PC-9 (cell line): ENCODE measurements at regions of chr20 and their contacts with region 1.

Region 1: DNA sequence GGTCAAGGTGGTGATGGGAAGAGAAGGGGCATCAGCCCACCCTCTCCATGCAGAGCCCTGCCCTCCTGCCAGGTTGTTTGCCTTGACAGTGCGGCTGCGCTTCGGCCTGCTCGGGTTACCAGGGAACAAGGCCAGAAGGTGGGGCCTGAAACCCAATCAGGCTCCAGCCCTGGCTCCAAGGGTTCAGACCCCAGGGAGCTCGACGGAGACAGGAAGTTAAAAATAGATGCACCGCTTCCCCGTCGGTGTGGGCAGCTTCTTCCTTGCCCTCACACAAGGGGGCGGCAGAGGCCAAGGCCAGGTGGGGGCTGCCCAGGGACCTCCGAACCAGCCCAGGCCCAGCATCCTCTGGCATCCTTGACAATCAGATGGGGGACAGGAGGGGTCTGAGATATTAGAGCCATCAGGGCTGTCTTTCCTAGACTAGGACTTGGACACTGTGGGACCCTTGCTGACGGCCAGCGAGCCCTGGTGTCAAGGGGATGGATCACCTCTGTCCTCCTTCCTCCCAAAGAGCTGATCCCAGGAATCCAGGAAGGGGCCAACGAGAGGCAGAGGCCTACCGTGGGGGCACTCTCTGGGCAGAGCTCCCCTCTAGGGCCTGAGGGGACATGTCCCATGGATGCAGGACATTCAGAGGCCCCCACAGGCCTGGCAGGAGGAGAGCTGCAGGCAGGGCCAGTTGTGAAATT is 65.2 kb downstream of the RIPOR3 start:
- DNase-seq: peak in 1 of 2 experiments; percentile 65
- H3K4me3 ChIP-seq: no peak overlapping the region
- H3K27ac ChIP-seq: no peak overlapping the region
- H3K4me1 ChIP-seq: peaks cover 45% of the 10 kb centered on the region
- H3K27me3 ChIP-seq: no peaks in the 10 kb centered on the region
- CTCF ChIP-seq: peak; percentile 72

Region 2: GRCh38 chr20:50558483-50558947 is 67.6 kb before region 1 on chr20:
- CTCF ChIA-PET with region 1: interaction called, 11 read pairs
- POLR2A ChIA-PET with region 1: no interaction called
- intact Hi-C with region 1: no loop called
- DNase-seq: peak; percentile 55 to 64
- H3K4me3 ChIP-seq: no peak overlapping the region
- H3K27ac ChIP-seq: peak overlapping the region; percentile 55
- H3K4me1 ChIP-seq: peaks cover 32% of the 10 kb centered on the region
- H3K27me3 ChIP-seq: no peaks in the 10 kb centered on the region
- CTCF ChIP-seq: no peak

Region 3: GRCh38 chr20:50645253-50646118 is 19.4 kb after region 1 on chr20:
- CTCF ChIA-PET with region 1: interaction called, 26 read pairs
- POLR2A ChIA-PET with region 1: no interaction called
- intact Hi-C with region 1: no loop called
- DNase-seq: peak; percentile 97 to 100
- H3K4me3 ChIP-seq: peak overlapping the region; percentile 16; the same call in 1 of the 2 replicates
- H3K27ac ChIP-seq: peak overlapping the region; percentile 86
- H3K4me1 ChIP-seq: peaks cover 62% of the 10 kb centered on the region
- H3K27me3 ChIP-seq: no peaks in the 10 kb centered on the region
- CTCF ChIP-seq: no peak